ENCODE measurements at regions of chr15 and their contacts with region 1.

Region 1: GRCh38 chr15:89442671-89443307 is 53.6 kb downstream of the RHCG start:
- DNase-seq: peak; percentile 68
- ATAC-seq: peak; percentile 49
- H3K4me3 Mint-ChIP-seq: no peak overlapping the region
- H3K27ac Mint-ChIP-seq: no peak overlapping the region
- H3K4me1 Mint-ChIP-seq: peaks cover 5% of the 10 kb centered on the region
- H3K27me3 Mint-ChIP-seq: peaks cover 22% of the 10 kb centered on the region

Region 2: GRCh38 chr15:89416141-89416853 is 26.5 kb before region 1 on chr15:
- CTCF ChIA-PET with region 1: interaction called, 11 read pairs
- DNase-seq: peak; percentile 88
- ATAC-seq: peak; percentile 86
- H3K4me3 Mint-ChIP-seq: no peak overlapping the region
- H3K27ac Mint-ChIP-seq: no peak overlapping the region
- H3K4me1 Mint-ChIP-seq: peaks cover 11% of the 10 kb centered on the region
- H3K27me3 Mint-ChIP-seq: peaks cover 91% of the 10 kb centered on the region

Region 3: GRCh38 chr15:89430530-89431341 is 12.1 kb before region 1 on chr15:
- CTCF ChIA-PET with region 1: interaction called, 17 read pairs
- DNase-seq: peak; percentile 88
- ATAC-seq: peak; percentile 95
- H3K4me3 Mint-ChIP-seq: peak overlapping the region; percentile 68
- H3K27ac Mint-ChIP-seq: no peak overlapping the region
- H3K4me1 Mint-ChIP-seq: peaks cover 6% of the 10 kb centered on the region
- H3K27me3 Mint-ChIP-seq: peaks cover 32% of the 10 kb centered on the region

Region 4: DNA sequence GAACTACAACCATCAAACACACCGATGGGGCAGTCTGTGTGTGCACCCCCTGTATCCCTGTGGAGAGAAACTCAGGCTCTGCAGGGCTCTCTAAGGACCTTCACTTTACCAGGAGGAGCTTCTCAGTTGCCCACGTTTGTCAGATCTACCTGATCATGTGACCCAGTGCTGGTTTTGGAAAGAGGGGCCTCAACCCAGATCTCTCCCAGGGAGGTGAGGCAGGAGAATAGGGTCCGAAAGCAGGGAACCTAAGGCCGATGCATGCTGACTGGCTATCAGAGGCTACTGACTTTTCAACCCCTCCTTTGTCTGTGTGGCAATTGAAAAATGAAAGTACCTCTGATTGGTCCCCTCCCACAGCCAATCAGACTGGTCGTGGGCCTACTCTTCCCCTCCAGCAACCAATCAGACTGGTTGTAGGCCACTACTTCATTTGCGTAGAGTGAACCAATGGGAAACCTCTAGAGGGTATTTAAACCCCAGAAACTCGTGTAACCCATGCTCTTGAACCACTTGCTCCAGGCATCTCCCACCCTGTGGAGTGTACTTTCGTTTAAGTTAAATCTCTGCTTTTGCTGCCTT is 19.6 kb after region 1 on chr15:
- CTCF ChIA-PET with region 1: interaction called, 13 read pairs
- DNase-seq: no peak
- ATAC-seq: peak; percentile 49
- H3K4me3 Mint-ChIP-seq: no peak overlapping the region
- H3K27ac Mint-ChIP-seq: no peak overlapping the region
- H3K4me1 Mint-ChIP-seq: no peaks in the 10 kb centered on the region
- H3K27me3 Mint-ChIP-seq: peaks cover 18% of the 10 kb centered on the region

Region 5: GRCh38 chr15:89472785-89473256 is 30.0 kb after region 1 on chr15:
- CTCF ChIA-PET with region 1: interaction called, 33 read pairs
- DNase-seq: peak; percentile 65
- ATAC-seq: peak; percentile 65
- H3K4me3 Mint-ChIP-seq: no peak overlapping the region
- H3K27ac Mint-ChIP-seq: no peak overlapping the region
- H3K4me1 Mint-ChIP-seq: no peaks in the 10 kb centered on the region
- H3K27me3 Mint-ChIP-seq: peaks cover 32% of the 10 kb centered on the region

Measured in activated CD8-positive, alpha-beta memory T cell treated with anti-CD3 and anti-CD28 coated beads, Interleukin-2, amount 10 ng/mL, durations not matched to agents 7 days and 5 days (primary cell).